ENCODE measurements at regions of chr20 and their contacts with region 1.

Region 1: DNA sequence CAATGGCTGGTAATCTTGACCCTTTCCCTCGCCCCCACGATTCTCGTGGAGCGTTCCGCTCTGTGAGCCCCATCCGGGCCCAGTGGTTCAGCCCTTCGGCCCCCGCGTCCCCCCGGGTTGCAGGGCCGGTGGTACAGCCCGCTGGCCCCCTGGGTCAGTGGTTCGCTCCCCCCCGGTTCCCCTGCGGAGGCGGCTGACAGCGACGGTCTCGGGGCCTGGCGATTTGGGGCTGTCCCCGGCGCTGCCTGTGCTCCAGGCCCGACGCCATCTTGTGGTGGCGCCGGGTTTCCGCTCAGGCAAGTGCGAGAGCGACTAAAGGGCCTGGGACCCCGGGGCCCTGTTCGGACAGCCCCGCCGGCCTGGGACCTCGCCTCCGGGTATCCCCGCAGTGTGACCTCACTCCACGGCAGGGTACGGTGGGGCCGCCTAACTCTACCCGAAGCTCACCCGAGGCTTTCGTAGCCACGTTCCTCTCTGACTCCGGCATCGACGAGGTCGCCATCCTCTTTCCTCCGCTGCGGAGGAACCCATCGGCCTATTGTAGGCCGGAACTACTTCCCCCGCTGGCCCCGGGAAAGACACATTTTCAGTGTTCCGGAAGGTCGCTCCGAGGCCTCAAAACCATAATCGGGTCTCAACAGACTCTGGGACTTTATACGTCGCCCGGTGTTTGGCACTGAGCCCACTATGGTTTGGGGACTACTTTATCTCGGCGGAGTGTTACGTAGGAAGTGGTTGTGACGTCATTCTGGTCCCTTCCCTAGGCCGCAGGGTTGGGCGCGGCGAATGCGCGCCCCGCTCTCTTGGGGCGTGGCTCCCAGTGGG is at the start of gene ZNF335:
- DNase-seq: peak; percentile 99
- H3K4me3 Mint-ChIP-seq: peak within 1 kb of the TSS; percentile 93
- H3K27ac Mint-ChIP-seq: peak within 1 kb of the TSS; percentile 99
- H3K4me1 Mint-ChIP-seq: peaks cover 14% of the 10 kb centered on the region
- H3K27me3 Mint-ChIP-seq: no peaks in the 10 kb centered on the region
- total RNA-seq, gene ZNF335: 37.5 and 39.5 TPM in 2 replicates

Region 2: GRCh38 chr20:45798935-45799642 is 172.8 kb before region 1 on chr20:
- intact Hi-C with region 1: loop called (anchors 2 kb)
- DNase-seq: peak; percentile 92
- H3K4me3 Mint-ChIP-seq: no peak overlapping the region
- H3K27ac Mint-ChIP-seq: peak overlapping the region; percentile 77
- H3K4me1 Mint-ChIP-seq: peaks cover 19% of the 10 kb centered on the region
- H3K27me3 Mint-ChIP-seq: no peaks in the 10 kb centered on the region

Region 3: DNA sequence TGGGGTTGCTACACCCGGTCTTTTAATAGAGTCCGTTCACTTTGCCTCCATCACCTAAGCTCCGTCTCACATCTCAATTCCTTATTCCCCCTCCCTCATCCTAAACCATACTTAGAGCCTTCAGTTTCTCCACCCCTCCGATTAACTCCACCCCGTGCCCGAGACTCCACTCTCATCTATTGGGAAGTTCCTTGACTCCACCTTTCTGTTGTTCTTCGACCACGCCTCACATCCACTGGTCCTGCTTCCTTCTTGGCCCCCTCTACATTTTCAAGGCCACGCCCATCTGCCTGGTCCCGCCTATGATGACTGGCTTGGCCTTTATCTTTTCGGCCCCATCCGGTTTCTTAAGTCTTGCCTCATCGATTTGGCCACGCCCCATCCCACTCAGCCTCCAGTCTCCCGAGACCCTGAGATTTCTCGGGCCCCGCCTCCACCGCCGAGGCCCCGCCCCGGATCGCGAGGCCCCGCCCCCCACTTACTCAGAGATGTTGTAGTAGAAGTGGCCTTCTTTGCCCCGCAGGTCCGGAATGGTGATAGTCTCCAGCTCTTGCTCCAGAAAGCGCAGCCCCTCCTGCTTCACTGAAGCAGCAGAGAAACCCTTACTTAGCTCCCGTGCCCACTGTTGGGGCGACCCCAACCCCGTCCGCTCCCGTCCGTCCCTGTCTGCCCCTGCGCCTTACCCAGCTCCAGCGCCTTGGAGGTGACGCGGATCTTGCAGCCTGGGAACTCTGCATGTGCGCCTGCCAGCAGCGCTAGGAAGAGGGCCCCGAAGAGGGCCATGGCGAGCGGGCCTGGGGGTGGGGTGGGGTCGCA is 61.0 kb before region 1 on chr20:
- intact Hi-C with region 1: loop called (anchors 1 kb)
- DNase-seq: peak; percentile 96
- H3K4me3 Mint-ChIP-seq: peak overlapping the region; percentile 84
- H3K27ac Mint-ChIP-seq: peak overlapping the region; percentile 86
- H3K4me1 Mint-ChIP-seq: peaks cover 11% of the 10 kb centered on the region
- H3K27me3 Mint-ChIP-seq: peaks cover 5% of the 10 kb centered on the region

Region 4: DNA sequence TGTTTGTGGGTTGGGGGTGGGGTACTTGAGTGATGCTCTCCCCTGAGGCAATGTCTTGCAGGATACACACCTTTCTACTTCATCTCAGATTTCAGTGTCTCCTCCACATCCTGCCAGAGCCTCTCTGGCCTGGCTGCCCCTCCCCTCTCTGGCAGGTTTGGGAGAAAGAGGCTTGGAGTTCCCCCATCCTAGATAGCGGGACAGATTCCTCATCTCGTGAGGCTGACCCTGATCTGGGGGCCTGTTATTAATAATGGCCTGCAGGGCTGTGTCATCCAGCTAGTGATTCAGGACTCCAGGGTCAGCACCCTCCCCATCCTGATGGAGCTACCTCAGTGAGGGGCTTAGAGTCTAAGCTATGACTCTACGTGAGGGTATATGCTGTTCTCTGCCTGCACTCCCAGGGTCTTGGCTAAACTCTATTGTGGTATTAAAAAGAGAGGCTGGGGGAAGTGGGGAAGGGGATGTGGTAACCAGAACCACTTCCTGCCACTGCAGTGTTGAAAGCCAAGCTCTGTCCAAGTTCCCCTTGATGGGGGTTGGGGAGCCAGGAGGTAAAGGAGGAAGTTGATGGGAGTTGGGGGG is 33.1 kb after region 1 on chr20:
- intact Hi-C with region 1: loop called (anchors 5 kb)
- DNase-seq: peak; percentile 83
- H3K4me3 Mint-ChIP-seq: peak overlapping the region; percentile 75
- H3K27ac Mint-ChIP-seq: peak overlapping the region; percentile 67
- H3K4me1 Mint-ChIP-seq: peaks cover 63% of the 10 kb centered on the region
- H3K27me3 Mint-ChIP-seq: peaks cover 23% of the 10 kb centered on the region

Region 5: DNA sequence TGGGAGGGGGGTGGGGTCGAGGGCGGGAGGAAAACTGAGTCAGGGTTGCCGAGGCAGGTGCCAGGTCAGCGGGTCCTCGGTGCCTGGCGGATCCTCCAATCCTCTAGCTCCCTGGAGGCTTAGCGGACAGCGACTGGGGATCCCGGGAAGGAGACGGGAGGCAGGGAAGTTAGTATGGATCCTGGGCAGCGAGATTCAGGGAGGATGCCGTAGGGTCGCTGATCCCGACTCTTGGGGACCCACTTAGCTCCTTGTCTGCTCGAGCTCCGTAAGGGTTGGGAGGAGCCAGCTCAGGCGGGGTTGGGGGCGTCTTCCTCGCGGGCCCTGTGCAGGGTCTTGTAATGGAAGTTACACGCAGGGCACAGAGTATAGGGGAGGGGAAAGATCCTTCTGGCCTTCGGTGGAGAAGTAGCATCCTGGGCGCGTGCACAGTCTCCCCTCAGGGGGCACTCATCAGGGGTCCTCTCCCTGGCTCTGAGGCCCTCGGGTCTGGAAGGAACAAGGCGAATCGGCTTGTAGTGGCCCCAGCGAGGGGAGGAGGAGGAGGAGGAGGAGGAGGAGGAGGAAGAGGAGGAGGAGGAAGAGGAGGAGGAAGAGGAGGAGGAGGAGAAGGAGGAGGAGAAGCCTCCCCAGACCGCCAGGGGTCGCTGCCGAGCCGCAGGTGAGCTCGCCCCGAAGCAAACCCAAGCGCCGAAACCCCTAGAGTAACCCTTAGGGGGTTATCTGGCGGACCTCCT is 50.7 kb after region 1 on chr20:
- intact Hi-C with region 1: no loop called
- DNase-seq: peak; percentile 93
- H3K4me3 Mint-ChIP-seq: peak overlapping the region; percentile 80
- H3K27ac Mint-ChIP-seq: no peak overlapping the region
- H3K4me1 Mint-ChIP-seq: peaks cover 17% of the 10 kb centered on the region
- H3K27me3 Mint-ChIP-seq: peaks cover 43% of the 10 kb centered on the region

Region 6: GRCh38 chr20:46051556-46052308 is 79.8 kb after region 1 on chr20:
- intact Hi-C with region 1: no loop called
- DNase-seq: no peak
- H3K4me3 Mint-ChIP-seq: no peak overlapping the region
- H3K27ac Mint-ChIP-seq: no peak overlapping the region
- H3K4me1 Mint-ChIP-seq: peaks cover 3% of the 10 kb centered on the region
- H3K27me3 Mint-ChIP-seq: peaks cover 31% of the 10 kb centered on the region